ENCODE measurements at regions of chr20 and their contacts with region 1.

Region 1: DNA sequence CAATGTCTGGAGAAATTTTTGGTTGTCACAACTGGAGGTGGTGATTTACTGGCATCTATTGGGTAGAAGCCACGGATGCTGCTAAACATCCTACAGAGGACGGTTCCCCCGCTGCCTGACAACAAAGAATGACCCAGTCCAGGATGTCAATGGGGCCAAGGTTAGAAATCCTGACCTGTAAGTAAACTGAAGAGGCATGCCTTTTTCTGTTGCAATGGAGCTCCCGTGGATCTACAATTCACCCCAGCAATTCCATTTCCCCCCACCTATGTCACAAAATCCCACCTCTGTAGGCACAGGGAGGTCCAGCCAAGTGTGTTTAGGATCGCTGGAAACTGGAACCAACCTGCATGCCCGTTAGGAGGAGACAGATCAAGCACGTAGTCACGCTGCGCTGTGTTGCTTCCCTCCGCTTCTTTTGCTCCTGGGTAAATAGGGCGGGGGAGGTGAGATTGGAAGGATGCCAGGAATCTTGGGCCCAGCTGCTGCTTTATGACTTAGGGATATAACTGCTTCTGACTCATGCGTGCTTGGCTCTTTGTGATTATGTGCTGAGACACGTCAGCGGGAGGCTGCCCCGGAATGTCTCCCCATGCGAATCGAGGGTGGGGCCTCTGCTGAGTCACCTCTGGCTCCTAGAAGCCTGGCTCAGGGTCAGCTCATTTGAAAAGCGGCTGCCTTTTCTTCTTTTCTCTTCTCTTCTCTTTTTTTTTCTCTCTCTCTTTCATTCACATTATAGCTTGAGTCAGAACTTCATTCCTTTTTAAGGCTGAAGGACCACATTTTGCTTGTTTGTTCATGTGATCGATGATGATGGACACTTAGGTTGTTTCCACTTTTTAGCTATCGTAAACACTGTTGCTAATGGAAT is 12.4 kb upstream of the PEDS1 start:
- DNase-seq: peak; percentile 98 to 100
- H3K4me3 ChIP-seq: peak overlapping the region; percentile 52
- H3K27ac ChIP-seq: peak overlapping the region; percentile 81
- H3K4me1 ChIP-seq: peaks cover 45% of the 10 kb centered on the region
- H3K27me3 ChIP-seq: no peaks in the 10 kb centered on the region
- CTCF ChIP-seq: 0 out of 2 replicates have a peak, but pooled peaks have one; percentile 14

Region 2: DNA sequence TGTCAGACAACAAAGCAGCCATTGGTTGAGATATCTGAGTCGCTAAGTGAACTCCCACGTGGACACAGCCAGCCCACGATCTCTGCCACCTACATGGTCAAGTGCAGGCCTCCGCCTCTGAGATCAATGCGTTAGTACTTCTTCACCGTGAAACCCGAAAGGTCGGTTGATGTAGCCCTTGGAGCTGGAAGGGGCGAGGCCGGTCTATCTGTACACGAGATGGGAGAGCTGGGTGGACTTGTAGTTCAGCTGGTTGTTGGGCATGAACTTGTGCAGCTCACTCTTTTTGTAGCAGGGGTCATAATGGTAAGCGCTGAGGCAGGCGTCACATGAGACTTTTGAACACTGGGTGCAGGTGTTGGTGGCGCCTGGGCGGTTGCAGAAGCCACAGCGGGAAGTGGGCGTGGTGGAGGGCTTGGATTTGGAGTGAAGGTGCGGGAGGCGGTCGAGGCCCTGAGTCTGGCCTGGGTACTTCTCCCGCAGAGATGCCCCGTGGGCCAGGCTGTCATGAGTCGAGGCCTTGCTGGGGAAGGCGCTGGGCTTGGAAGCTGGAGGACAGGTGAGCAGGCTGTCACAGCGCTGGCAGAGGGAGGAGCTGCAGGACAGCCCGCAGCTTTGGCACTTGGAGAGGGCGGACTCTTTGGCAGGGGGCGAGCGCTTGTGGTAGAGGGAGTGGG is 260.4 kb before region 1 on chr20:
- CTCF ChIA-PET with region 1: no interaction called
- POLR2A ChIA-PET with region 1: no interaction called
- intact Hi-C with region 1: no loop called
- DNase-seq: no peak
- H3K4me3 ChIP-seq: no peak overlapping the region
- H3K27ac ChIP-seq: no peak overlapping the region
- H3K4me1 ChIP-seq: no peaks in the 10 kb centered on the region
- H3K27me3 ChIP-seq: no peaks in the 10 kb centered on the region
- CTCF ChIP-seq: no peak

Region 3: GRCh38 chr20:49915378-49916145 is 250.4 kb before region 1 on chr20 and contains the start of gene SPATA2:
- CTCF ChIA-PET with region 1: no interaction called
- POLR2A ChIA-PET with region 1: no interaction called
- intact Hi-C with region 1: loop called (anchors 5 kb)
- DNase-seq: peak; percentile 90 to 93
- H3K4me3 ChIP-seq: peak within 1 kb of the TSS; percentile 90
- H3K27ac ChIP-seq: peak within 1 kb of the TSS; percentile 96
- H3K4me1 ChIP-seq: peaks cover 32% of the 10 kb centered on the region
- H3K27me3 ChIP-seq: no peaks in the 10 kb centered on the region
- CTCF ChIP-seq: no peak; the same call in 1 of the 2 replicates
- total RNA-seq, gene SPATA2: 7.3 and 10.9 TPM in 2 replicates

Region 4: DNA sequence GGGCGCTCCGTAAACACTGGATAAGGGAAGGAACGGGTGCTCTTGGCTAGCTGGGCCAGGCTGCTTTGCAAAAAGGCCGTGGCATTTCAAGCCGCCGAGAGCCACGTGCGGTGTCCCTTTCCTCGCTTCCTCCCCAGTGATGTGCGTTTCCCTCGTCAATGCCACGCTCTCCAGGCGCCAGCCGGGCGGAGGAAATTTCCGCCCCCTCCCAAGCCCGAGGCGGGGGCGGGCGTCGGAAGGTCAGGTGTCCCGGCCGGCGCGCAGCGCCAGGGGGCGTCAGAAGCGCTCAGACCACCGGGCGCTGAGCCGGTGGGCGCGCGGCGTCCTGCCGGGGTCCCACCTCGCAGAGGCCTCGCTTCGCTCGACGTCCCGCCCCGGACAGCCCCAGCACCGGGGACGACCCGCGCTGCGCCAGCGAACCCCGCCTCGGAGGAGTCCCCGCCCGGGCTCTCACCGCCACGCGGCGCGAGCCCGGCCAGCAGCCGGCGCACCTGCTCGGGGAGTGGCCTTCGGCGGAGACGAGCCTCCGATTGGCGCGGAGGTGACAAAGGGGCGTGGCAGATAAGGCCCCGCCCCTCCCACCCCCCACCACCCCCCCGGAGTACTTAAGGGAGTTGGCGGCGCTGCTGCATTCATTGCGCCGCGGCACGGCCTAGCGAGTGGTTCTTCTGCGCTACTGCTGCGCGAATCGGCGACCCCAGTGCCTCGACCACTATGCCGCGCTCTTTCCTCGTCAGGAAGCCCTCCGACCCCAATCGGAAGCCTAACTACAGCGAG is 183.4 kb before region 1 on chr20 and contains the start of gene SNAI1:
- CTCF ChIA-PET with region 1: no interaction called
- POLR2A ChIA-PET with region 1: no interaction called
- intact Hi-C with region 1: loop called (anchors 5 kb)
- DNase-seq: peak; percentile 82 to 88
- H3K4me3 ChIP-seq: peak within 1 kb of the TSS; percentile 75
- H3K27ac ChIP-seq: no peak within 1 kb of the TSS
- H3K4me1 ChIP-seq: peaks cover 10% of the 10 kb centered on the region
- H3K27me3 ChIP-seq: no peaks in the 10 kb centered on the region
- CTCF ChIP-seq: peak; percentile 68
- total RNA-seq, gene SNAI1: 2.2 and 3.6 TPM in 2 replicates

Region 5: DNA sequence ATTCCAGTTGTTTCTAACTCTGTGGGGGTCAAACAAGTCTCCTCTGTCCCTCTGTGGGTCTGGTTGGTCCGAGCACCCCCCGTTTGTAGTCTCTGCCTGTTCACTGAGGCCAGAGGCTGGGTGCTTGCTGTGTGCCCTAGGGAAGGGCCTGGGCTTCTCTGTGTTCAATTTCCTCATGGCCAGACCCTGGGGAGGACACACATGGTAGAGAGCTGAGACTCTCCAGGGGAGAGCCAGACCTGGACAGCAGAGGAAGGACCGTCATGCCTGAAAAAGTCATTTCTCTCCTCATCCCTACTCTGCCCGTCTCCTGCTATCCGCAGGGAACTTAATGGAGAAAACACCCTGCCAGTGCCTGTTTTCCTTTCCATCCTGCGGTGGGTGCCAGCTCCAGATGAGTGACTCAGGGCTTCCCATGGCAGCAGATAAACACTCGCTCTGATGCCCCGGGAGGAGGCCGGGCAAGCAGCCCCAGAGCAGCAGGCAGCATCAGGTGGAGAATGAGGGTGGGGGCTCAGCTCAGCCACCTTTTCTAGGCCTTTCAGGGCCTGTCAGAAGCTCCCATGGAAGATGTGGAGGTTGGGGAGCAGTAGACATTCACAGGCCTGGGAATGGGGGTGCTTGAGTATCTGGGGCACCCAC is 131.2 kb before region 1 on chr20:
- CTCF ChIA-PET with region 1: no interaction called
- POLR2A ChIA-PET with region 1: no interaction called
- intact Hi-C with region 1: no loop called
- DNase-seq: peak in 1 of 2 experiments; percentile 65
- H3K4me3 ChIP-seq: no peak overlapping the region
- H3K27ac ChIP-seq: peak overlapping the region; percentile 70
- H3K4me1 ChIP-seq: peaks cover 56% of the 10 kb centered on the region
- H3K27me3 ChIP-seq: no peaks in the 10 kb centered on the region
- CTCF ChIP-seq: no peak

Region 6: GRCh38 chr20:50085452-50086365 is 80.2 kb before region 1 on chr20:
- CTCF ChIA-PET with region 1: interaction called, 3 read pairs
- POLR2A ChIA-PET with region 1: interaction called, 9 read pairs
- intact Hi-C with region 1: loop called (anchors 1 kb)
- DNase-seq: peak; percentile 43 to 66
- H3K4me3 ChIP-seq: peak overlapping the region; percentile 24; the same call in 1 of the 2 replicates
- H3K27ac ChIP-seq: peak overlapping the region; percentile 81
- H3K4me1 ChIP-seq: peaks cover 41% of the 10 kb centered on the region
- H3K27me3 ChIP-seq: no peaks in the 10 kb centered on the region
- CTCF ChIP-seq: peak; percentile 92

Region 7: GRCh38 chr20:50146732-50147662 is 18.9 kb before region 1 on chr20:
- CTCF ChIA-PET with region 1: interaction called, 11 read pairs
- POLR2A ChIA-PET with region 1: interaction called, 3 read pairs
- intact Hi-C with region 1: loop called (anchors 1 kb)
- DNase-seq: peak; percentile 75 to 76
- H3K4me3 ChIP-seq: peak overlapping the region; percentile 40; the same call in 1 of the 2 replicates
- H3K27ac ChIP-seq: peak overlapping the region; percentile 89
- H3K4me1 ChIP-seq: peaks cover 81% of the 10 kb centered on the region
- H3K27me3 ChIP-seq: no peaks in the 10 kb centered on the region
- CTCF ChIP-seq: no peak